H1 (cell line): ENCODE measurements at regions of chr17 and their contacts with region 1.

Region 1: DNA sequence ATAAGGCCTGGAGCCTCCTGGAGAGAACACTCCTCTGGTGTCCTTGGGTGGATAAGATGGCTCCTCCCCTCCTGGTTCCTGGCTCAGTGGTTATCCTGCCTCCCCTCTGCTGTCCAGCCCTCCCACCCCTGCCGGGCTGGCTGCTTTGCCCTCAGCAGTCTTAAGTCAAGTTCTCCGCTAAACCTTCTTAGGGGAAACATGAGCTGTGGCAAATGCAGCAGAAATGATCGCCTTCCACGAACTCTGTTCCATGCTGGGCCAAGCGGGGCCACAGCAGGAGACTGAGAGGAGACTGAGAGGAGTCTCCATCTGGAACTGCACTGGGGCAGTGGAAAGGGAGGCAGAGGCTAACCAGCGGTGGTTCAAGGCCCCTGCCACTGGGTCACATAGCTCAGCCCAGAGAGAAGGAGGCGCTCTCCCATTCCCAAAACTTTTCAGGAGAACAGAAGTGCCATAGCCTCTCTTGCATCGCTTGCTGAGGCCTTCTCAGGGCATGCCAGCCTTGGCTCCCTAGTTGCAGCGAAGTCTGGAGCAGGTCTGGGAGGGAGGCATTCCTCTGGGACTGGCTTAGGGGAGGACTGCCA is 26.9 kb downstream of the TNS4 start:
- DNase-seq: no peak
- H3K4me3 ChIP-seq: no peak overlapping the region
- H3K27ac ChIP-seq: no peak overlapping the region
- H3K4me1 ChIP-seq: peaks cover 3 to 15% (median 10%) of the 10 kb centered on the region in 4 experiments
- H3K27me3 ChIP-seq: no peaks in the 10 kb centered on the region; a peak in 1 of 7 replicates
- CTCF ChIP-seq: no peak
- EP300 ChIP-seq: no peak
- POLR2A ChIP-seq: no peak
- RAD21 ChIP-seq: no peak

Region 2: DNA sequence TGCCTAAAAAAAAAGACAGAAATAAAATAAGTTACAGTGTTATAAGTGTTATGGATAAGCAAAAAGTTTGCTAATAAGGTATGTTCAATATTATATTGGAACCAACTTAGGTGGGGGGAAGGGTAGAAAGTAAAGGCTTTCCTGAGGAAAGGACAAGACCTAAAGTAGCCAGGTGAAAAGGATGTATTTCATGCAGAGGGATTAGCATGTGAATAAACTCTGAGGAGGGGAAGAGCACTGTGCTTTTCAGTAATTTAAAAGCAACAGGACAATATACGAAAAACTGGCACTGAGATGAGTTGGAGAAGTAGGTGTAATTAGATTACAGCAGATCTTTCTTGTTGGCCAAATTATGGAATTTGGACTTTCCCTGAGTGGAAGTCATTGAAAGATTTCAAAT is 64.4 kb before region 1 on chr17:
- CTCF ChIA-PET with region 1: interaction called, 14 read pairs
- POLR2A ChIA-PET with region 1: interaction called, 3 read pairs
- DNase-seq: no peak
- H3K4me3 ChIP-seq: peak overlapping the region in 1 of 4 experiments; percentile 38; a peak in 2 of 8 replicates
- H3K27ac ChIP-seq: peak overlapping the region; percentile 33; the same call in 1 of the 2 replicates
- H3K4me1 ChIP-seq: peaks cover 0 to 12% (median 1%) of the 10 kb centered on the region in 4 experiments; a peak in 3 of 7 replicates
- H3K27me3 ChIP-seq: no peaks in the 10 kb centered on the region
- CTCF ChIP-seq: no peak
- EP300 ChIP-seq: no peak
- POLR2A ChIP-seq: no peak
- RAD21 ChIP-seq: no peak

Region 3: GRCh38 chr17:40422990-40423616 is 51.4 kb before region 1 on chr17:
- CTCF ChIA-PET with region 1: interaction called, 18 read pairs
- POLR2A ChIA-PET with region 1: interaction called, 4 read pairs
- DNase-seq: peak in 1 of 2 experiments; percentile 73
- H3K4me3 ChIP-seq: peak overlapping the region in 1 of 4 experiments; percentile 11; a peak in 1 of 8 replicates
- H3K27ac ChIP-seq: no peak overlapping the region
- H3K4me1 ChIP-seq: peaks cover 4 to 21% (median 10%) of the 10 kb centered on the region in 4 experiments
- H3K27me3 ChIP-seq: no peaks in the 10 kb centered on the region
- CTCF ChIP-seq: peak; percentile 1 to 16 (median 4); a peak in 3 of 4 replicates
- EP300 ChIP-seq: no peak; a peak in 1 of 3 replicates
- POLR2A ChIP-seq: no peak
- RAD21 ChIP-seq: no peak

Region 4: GRCh38 chr17:40461732-40462342 is 12.7 kb before region 1 on chr17:
- CTCF ChIA-PET with region 1: interaction called, 739 read pairs
- POLR2A ChIA-PET with region 1: interaction called, 11 read pairs
- DNase-seq: no peak
- H3K4me3 ChIP-seq: no peak overlapping the region
- H3K27ac ChIP-seq: no peak overlapping the region
- H3K4me1 ChIP-seq: peaks cover 2 to 39% (median 16%) of the 10 kb centered on the region in 4 experiments
- H3K27me3 ChIP-seq: no peaks in the 10 kb centered on the region
- CTCF ChIP-seq: no peak
- EP300 ChIP-seq: no peak
- POLR2A ChIP-seq: no peak
- RAD21 ChIP-seq: no peak

Region 5: GRCh38 chr17:40499551-40500174 is 25.2 kb after region 1 on chr17:
- CTCF ChIA-PET with region 1: interaction called, 46 read pairs
- POLR2A ChIA-PET with region 1: interaction called, 8 read pairs
- DNase-seq: peak in 1 of 2 experiments; percentile 89
- H3K4me3 ChIP-seq: peak overlapping the region in 1 of 4 experiments; percentile 10; a peak in 2 of 8 replicates
- H3K27ac ChIP-seq: no peak overlapping the region
- H3K4me1 ChIP-seq: peaks cover 5 to 18% (median 7%) of the 10 kb centered on the region in 4 experiments; a peak in 6 of 7 replicates
- H3K27me3 ChIP-seq: no peaks in the 10 kb centered on the region
- CTCF ChIP-seq: peak in 1 of 3 experiments; percentile 21; a peak in 2 of 4 replicates
- EP300 ChIP-seq: no peak
- POLR2A ChIP-seq: no peak
- RAD21 ChIP-seq: no peak

Region 6: DNA sequence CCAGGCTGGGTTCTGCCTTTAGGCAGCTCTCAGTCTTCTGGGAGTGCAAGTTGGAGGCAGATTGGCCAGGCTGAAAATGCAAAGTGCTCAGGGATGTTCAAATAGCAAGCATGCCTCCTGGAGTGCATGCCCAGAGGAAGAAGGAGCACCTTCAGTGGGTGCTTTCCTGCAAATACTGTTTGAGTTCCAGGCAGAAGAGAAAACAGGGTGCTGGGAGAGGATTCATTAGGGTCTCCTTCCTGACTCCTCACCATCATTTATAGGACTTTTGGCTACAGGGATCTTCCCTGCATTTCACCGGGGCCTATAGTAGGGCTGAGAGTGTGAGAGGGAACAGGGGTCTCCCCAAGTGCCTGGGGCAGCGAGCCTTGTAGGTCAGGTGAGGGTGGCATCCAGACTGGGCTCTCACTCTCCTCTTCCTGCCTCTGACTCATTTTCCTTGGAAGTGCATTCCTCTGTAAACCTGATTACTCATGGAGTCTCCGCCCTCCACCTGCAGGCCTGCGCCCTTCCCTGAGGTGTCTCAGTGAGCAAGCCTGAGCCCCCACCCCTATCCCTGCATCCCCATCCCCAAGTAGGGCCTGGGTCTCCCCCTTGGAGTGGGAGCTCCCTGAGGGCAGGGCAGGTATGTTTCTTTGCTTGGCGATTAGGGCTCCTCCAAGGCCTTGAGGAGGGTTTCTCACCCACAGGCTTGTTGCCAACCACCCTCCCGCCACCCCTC is 44.0 kb after region 1 on chr17:
- CTCF ChIA-PET with region 1: interaction called, 11 read pairs
- POLR2A ChIA-PET with region 1: interaction called, 4 read pairs
- DNase-seq: no peak
- H3K4me3 ChIP-seq: no peak overlapping the region
- H3K27ac ChIP-seq: no peak overlapping the region
- H3K4me1 ChIP-seq: peaks cover 0 to 10% (median 2%) of the 10 kb centered on the region in 4 experiments; a peak in 5 of 7 replicates
- H3K27me3 ChIP-seq: no peaks in the 10 kb centered on the region
- CTCF ChIP-seq: no peak
- EP300 ChIP-seq: no peak
- POLR2A ChIP-seq: no peak
- RAD21 ChIP-seq: no peak

Region 7: GRCh38 chr17:40536295-40537171 is 62.0 kb after region 1 on chr17:
- CTCF ChIA-PET with region 1: interaction called, 125 read pairs
- POLR2A ChIA-PET with region 1: interaction called, 6 read pairs
- DNase-seq: no peak
- H3K4me3 ChIP-seq: no peak overlapping the region
- H3K27ac ChIP-seq: no peak overlapping the region
- H3K4me1 ChIP-seq: peaks cover 0 to 8% (median 1%) of the 10 kb centered on the region in 4 experiments; a peak in 2 of 7 replicates
- H3K27me3 ChIP-seq: no peaks in the 10 kb centered on the region; a peak in 1 of 7 replicates
- CTCF ChIP-seq: no peak
- EP300 ChIP-seq: no peak
- POLR2A ChIP-seq: no peak
- RAD21 ChIP-seq: no peak